Psoas muscle (tissue), 8 donors: ENCODE measurements at regions of chr22 and their contacts with region 1.

Region 1: DNA sequence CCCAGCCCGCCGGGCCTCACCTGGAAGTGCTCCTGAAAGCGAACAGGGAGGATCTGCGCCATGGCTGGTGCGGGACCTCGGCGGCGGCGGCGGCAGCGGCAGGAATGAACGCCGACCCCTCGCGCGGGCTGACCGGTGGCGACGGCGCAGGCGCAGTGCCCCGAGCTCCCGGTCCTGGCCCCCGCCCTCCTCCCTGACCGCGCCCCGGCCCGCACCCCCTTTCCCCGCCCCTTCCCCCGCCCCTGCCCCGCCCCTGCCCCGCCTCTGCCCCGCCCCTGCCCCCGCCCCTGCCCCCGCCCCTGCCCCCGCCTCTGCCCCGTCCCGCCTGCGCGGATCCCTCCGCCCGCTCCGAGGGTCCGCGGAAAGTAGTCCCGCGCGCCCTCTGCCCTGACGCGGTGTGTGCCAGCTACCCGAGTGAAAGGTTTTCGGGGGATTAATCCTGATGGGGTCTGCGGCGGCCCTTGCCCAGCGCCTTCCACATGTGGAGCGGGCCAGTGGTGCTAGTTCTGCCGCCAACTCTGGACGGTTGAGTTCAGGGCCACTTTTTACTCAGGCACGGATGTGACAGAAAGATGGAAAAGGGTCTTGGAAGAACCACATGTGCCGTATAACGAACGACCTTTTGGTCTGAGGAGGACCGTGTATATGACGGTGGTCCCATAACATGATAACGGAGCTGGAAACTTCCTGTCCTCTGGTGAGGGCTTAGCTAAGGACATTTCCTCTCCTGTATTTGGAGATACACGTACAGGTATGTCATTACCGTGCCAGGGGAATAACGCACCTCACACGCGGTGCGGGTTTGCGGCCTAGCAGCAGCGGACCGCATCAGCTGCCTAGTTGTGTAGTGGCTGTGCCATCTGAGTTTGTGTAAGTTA is at the start of gene CLTCL1:
- DNase-seq: peak; percentile 88 to 94
- ATAC-seq: peak; percentile 31 to 44 (median 36)
- H3K4me3 ChIP-seq: peak within 1 kb of the TSS; percentile 92
- H3K27ac ChIP-seq: peak within 1 kb of the TSS; percentile 97
- H3K4me1 ChIP-seq: peaks cover 37% of the 10 kb centered on the region
- H3K27me3 ChIP-seq: no peaks in the 10 kb centered on the region
- CTCF ChIP-seq: no peak
- total RNA-seq, gene CLTCL1: 92.6 to 253 (median 126) TPM

Region 2: GRCh38 chr22:18905540-18906409 is 386.0 kb before region 1 on chr22 and contains the start of gene DGCR6:
- intact Hi-C with region 1: no loop called
- DNase-seq: peak; percentile 7 to 22
- ATAC-seq: peak; percentile 91 to 95 (median 92)
- H3K4me3 ChIP-seq: no peak within 1 kb of the TSS
- H3K27ac ChIP-seq: no peak within 1 kb of the TSS
- H3K4me1 ChIP-seq: no peaks in the 10 kb centered on the region
- H3K27me3 ChIP-seq: no peaks in the 10 kb centered on the region
- CTCF ChIP-seq: no peak
- total RNA-seq, gene DGCR6: 13.1 to 30.6 (median 21.7) TPM

Region 3: GRCh38 chr22:19432133-19432851 is 140.5 kb after region 1 on chr22 and contains the start of gene MRPL40:
- intact Hi-C with region 1: no loop called
- DNase-seq: peak; percentile 97 to 98
- ATAC-seq: peak; percentile 91 to 96 (median 92)
- H3K4me3 ChIP-seq: peak within 1 kb of the TSS; percentile 97
- H3K27ac ChIP-seq: peak within 1 kb of the TSS; percentile 96
- H3K4me1 ChIP-seq: peaks cover 30% of the 10 kb centered on the region
- H3K27me3 ChIP-seq: no peaks in the 10 kb centered on the region
- CTCF ChIP-seq: peak; percentile 8
- total RNA-seq, gene MRPL40: 53.7 to 70.5 (median 58.2) TPM

Region 4: GRCh38 chr22:19447388-19448075 is 155.7 kb after region 1 on chr22 and contains the start of gene C22orf39:
- intact Hi-C with region 1: loop called (anchors 5 to 10 kb)
- DNase-seq: peak; percentile 87 to 94
- ATAC-seq: peak; percentile 89 to 95 (median 90)
- H3K4me3 ChIP-seq: peak within 1 kb of the TSS; percentile 94
- H3K27ac ChIP-seq: peak within 1 kb of the TSS; percentile 98
- H3K4me1 ChIP-seq: peaks cover 46% of the 10 kb centered on the region
- H3K27me3 ChIP-seq: no peaks in the 10 kb centered on the region
- CTCF ChIP-seq: no peak
- total RNA-seq, gene C22orf39: 84.3 to 101 (median 92.3) TPM

Region 5: GRCh38 chr22:19479357-19480172 is 187.7 kb after region 1 on chr22 and contains the start of gene CDC45:
- intact Hi-C with region 1: loop called in 1 of 2 experiments (anchors 10 kb)
- DNase-seq: peak; percentile 96 to 98
- ATAC-seq: peak; percentile 88 to 92 (median 90)
- H3K4me3 ChIP-seq: peak within 1 kb of the TSS; percentile 84
- H3K27ac ChIP-seq: peak within 1 kb of the TSS; percentile 97
- H3K4me1 ChIP-seq: peaks cover 35% of the 10 kb centered on the region
- H3K27me3 ChIP-seq: no peaks in the 10 kb centered on the region
- CTCF ChIP-seq: no peak
- total RNA-seq, gene CDC45: 0.50 to 0.71 TPM in 2 of 4 donors, not detected in the others